ENCODE measurements at regions of chr4 and their contacts with region 1.

Region 1: DNA sequence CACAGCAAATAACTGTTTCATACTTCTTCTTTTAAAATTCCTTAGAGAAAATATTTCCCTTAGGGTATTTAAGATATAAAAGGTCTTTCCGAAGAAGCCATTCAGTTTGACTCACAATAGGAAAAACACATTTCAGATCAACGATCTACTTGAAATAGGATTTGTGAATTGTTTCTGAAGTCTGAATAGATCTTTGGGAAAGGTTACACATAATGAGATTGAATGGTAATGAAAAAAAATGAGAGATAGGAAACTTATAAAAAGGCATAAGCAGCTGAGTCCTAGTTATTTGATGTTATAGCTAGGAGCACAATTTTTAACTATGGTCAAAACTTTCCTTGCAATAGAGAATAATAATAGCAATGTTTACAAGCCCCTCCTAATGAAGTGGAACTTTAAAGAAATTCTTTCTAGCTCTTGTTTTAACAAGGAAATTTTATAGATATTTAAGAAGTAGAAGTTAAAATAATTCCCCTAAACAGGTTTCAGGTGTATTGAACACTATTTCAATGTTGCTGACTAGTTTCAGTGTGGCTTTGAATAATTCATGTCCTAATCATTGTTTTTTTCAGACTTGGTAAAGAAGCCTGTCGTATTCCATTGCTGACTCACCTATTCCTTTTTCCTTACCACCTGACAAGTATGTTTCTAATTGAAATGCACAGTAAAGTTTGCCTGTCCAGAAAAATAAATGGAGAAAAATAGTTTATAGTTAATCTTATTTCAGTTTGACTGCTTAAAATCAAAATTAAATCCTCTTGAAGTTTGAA is 89.1 kb downstream of the PCDH18 start:
- DNase-seq: no peak
- ATAC-seq: no peak
- H3K4me3 ChIP-seq: no peak overlapping the region
- H3K4me3 Mint-ChIP-seq: no peak overlapping the region
- H3K27ac ChIP-seq: no peak overlapping the region
- H3K27ac Mint-ChIP-seq: no peak overlapping the region
- H3K4me1 ChIP-seq: no peaks in the 10 kb centered on the region
- H3K4me1 Mint-ChIP-seq: no peaks in the 10 kb centered on the region
- H3K27me3 ChIP-seq: no peaks in the 10 kb centered on the region
- H3K27me3 Mint-ChIP-seq: no peaks in the 10 kb centered on the region

Region 2: GRCh38 chr4:136831543-136831942 is 611.7 kb before region 1 on chr4:
- CTCF ChIA-PET with region 1: no interaction called
- POLR2A ChIA-PET with region 1: no interaction called
- intact Hi-C with region 1: no loop called
- DNase-seq: no peak
- ATAC-seq: no peak
- H3K4me3 ChIP-seq: no peak overlapping the region
- H3K4me3 Mint-ChIP-seq: no peak overlapping the region
- H3K27ac ChIP-seq: no peak overlapping the region
- H3K27ac Mint-ChIP-seq: no peak overlapping the region
- H3K4me1 ChIP-seq: no peaks in the 10 kb centered on the region
- H3K4me1 Mint-ChIP-seq: no peaks in the 10 kb centered on the region
- H3K27me3 ChIP-seq: no peaks in the 10 kb centered on the region
- H3K27me3 Mint-ChIP-seq: no peaks in the 10 kb centered on the region

Region 3: DNA sequence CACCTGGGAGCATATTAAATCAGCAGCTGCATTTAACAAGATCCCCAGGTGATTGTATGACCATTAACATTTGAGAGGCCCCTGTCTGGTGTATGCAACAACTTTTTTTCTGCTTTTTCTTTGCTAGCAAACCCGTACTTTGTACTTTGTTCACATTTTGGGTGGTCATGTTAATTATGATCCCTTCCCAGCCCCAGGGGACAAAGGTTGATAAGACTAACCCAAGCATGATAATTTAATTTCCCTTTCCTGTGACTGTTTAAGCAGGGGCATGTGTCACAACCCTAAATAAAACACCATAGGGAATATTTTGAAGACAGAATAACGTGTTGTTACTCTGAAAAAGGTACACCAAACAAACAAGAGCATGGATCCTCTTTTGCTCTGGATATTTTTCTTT is 242.9 kb before region 1 on chr4:
- CTCF ChIA-PET with region 1: no interaction called
- POLR2A ChIA-PET with region 1: no interaction called
- intact Hi-C with region 1: no loop called
- DNase-seq: no peak
- ATAC-seq: no peak
- H3K4me3 ChIP-seq: no peak overlapping the region
- H3K4me3 Mint-ChIP-seq: no peak overlapping the region
- H3K27ac ChIP-seq: no peak overlapping the region
- H3K27ac Mint-ChIP-seq: no peak overlapping the region
- H3K4me1 ChIP-seq: no peaks in the 10 kb centered on the region
- H3K4me1 Mint-ChIP-seq: no peaks in the 10 kb centered on the region
- H3K27me3 ChIP-seq: no peaks in the 10 kb centered on the region
- H3K27me3 Mint-ChIP-seq: no peaks in the 10 kb centered on the region

Region 4: GRCh38 chr4:137343221-137343620 is 100.0 kb before region 1 on chr4:
- CTCF ChIA-PET with region 1: no interaction called
- POLR2A ChIA-PET with region 1: no interaction called
- intact Hi-C with region 1: no loop called
- DNase-seq: no peak
- ATAC-seq: no peak
- H3K4me3 ChIP-seq: no peak overlapping the region
- H3K4me3 Mint-ChIP-seq: no peak overlapping the region
- H3K27ac ChIP-seq: no peak overlapping the region
- H3K27ac Mint-ChIP-seq: no peak overlapping the region
- H3K4me1 ChIP-seq: no peaks in the 10 kb centered on the region
- H3K4me1 Mint-ChIP-seq: no peaks in the 10 kb centered on the region
- H3K27me3 ChIP-seq: no peaks in the 10 kb centered on the region
- H3K27me3 Mint-ChIP-seq: no peaks in the 10 kb centered on the region

Region 5: GRCh38 chr4:138297743-138298405 is 854.7 kb after region 1 on chr4:
- CTCF ChIA-PET with region 1: no interaction called
- POLR2A ChIA-PET with region 1: no interaction called
- intact Hi-C with region 1: loop called in 1 of 2 experiments (anchors 10 kb)
- DNase-seq: no peak
- ATAC-seq: no peak
- H3K4me3 ChIP-seq: no peak overlapping the region
- H3K4me3 Mint-ChIP-seq: no peak overlapping the region
- H3K27ac ChIP-seq: no peak overlapping the region
- H3K27ac Mint-ChIP-seq: no peak overlapping the region
- H3K4me1 ChIP-seq: no peaks in the 10 kb centered on the region
- H3K4me1 Mint-ChIP-seq: no peaks in the 10 kb centered on the region
- H3K27me3 ChIP-seq: no peaks in the 10 kb centered on the region
- H3K27me3 Mint-ChIP-seq: peaks cover 0 to 3% (median 0%) of the 10 kb centered on the region in 5 donors

Measured in naive thymus-derived CD4-positive, alpha-beta T cell (primary cell).